ENCODE measurements at regions of chr20 and their contacts with region 1.

Region 1: DNA sequence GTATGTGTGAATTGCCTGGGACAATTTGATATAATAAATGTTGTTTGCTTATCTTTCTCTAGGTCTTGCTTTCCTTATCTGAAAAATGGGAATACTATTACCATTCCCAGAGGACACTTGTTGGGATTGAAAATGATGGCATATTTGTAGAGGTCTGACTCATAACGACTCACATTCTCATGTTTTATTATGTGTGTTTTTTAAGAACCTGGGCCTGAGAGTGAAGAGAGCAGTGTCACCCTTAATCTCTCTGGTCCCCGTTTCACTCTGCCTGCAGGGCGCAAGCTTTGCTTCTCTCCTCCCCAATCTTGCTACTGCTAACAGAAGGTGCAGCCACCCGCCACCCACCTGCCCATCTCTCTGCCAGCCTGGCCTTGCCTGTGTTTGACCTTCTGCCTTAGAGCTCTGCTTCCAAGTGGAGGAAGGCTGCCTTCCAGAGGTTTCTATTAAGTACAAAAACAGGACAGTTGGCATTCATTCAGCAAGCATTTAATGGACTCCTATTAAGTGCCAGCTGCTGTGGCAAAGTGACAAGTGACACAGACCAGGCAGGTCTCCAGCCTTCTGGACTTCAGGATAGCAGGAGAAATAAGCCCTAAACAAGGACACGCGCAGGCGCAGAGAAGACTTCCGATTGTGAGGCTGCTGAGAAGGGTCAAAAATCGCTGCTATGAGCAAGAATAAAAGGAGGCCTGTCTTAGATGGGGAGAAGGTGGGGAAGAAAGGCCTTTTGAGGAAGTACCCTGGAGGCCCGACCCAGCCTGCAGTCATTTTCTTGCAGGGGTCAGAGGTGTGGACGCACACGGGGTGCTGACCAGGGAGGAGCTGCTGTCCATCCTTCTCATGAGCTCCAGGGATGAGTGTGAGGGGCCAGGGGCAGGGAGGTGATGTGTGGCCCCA is 112.5 kb downstream of the JPH2 start:
- DNase-seq: peak in 1 of 5 donors; percentile 8
- H3K4me3 ChIP-seq: no peak overlapping the region
- H3K27ac ChIP-seq: no peak overlapping the region
- H3K4me1 ChIP-seq: no peaks in the 10 kb centered on the region
- H3K27me3 ChIP-seq: no peaks in the 10 kb centered on the region
- CTCF ChIP-seq: no peak
- EP300 ChIP-seq: no peak
- POLR2A ChIP-seq: no peak

Region 2: DNA sequence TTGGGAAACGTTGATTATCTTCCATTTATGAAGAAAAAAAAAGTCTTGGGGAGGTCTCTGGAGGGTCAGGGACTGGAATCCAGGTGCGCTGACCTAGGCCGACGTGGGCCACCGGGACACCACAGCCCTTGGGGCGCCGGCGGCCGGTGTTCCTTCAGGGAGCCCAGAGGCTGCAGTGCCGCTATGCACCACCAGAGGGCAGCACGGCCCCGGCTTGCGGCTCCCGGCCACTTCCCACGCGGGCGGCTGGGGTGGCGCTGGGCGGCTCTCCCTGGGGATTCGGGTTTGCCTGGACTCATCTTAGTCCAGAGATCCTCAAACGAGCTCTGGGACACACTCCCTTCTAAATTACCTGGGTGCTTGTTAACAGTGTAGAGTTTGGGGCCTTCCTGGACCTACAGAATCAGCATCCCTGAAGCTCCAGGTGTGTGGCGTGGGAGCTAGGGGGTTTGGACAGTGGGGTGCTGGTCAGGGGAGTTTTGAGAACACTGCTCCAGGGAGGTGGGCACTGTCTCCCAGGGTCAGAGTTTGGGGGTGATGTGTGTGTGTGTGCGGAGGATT is 324.7 kb before region 1 on chr20:
- intact Hi-C with region 1: loop called in 1 of 4 experiments (anchors 5 kb)
- DNase-seq: peak; percentile 30 to 79 (median 46)
- H3K4me3 ChIP-seq: no peak overlapping the region
- H3K27ac ChIP-seq: no peak overlapping the region
- H3K4me1 ChIP-seq: no peaks in the 10 kb centered on the region
- H3K27me3 ChIP-seq: no peaks in the 10 kb centered on the region
- CTCF ChIP-seq: peak in 2 of 3 donors; percentile 51 to 90
- EP300 ChIP-seq: no peak
- POLR2A ChIP-seq: no peak

Region 3: DNA sequence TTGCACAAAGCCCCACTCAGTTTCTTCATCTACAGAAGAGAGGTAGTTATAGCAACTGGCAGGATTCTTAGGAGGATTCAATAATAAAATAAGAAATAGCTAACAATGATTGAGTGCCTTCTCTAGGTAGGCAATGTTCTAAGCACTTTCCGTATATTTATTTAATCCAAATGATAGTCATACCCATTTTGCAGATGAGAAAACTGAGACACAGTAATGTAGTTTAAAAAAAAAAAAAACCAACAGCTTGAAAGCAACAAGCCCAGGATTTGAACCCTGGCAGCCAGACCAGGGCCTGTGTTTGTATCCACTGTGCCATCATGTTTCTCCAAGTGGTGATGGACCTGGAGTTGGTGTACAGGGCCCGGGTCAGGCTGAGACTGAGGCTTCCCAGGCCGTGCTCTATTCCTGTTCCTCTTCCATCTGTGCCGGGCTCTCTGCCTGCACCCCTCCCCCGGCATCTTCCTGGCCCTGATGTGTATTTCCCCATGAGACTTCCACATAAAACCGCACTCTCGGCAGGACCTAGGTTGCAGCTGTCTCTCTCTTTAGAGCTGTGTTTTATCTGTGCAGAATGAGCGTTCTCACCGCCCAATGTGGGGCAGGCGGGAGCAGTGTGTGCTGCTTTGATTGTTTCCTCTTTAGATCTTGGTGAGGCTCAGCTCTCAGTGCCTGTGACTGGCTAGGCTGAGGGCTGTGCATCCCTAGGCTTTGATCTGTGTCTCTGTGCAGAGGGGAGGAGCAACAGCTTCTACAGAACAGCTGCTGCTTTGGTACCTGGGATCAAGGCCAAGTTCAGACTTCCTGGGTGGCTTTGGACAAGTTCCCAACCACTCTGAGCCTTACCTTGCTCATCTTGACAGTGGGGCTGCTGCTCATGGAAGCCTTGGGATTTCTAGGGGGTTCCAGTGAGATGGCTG is 110.4 kb before region 1 on chr20:
- intact Hi-C with region 1: no loop called
- DNase-seq: peak in 1 of 5 donors; percentile 54
- H3K4me3 ChIP-seq: no peak overlapping the region
- H3K27ac ChIP-seq: no peak overlapping the region
- H3K4me1 ChIP-seq: peaks cover 4% of the 10 kb centered on the region
- H3K27me3 ChIP-seq: no peaks in the 10 kb centered on the region
- CTCF ChIP-seq: no peak
- EP300 ChIP-seq: no peak
- POLR2A ChIP-seq: no peak

Region 4: DNA sequence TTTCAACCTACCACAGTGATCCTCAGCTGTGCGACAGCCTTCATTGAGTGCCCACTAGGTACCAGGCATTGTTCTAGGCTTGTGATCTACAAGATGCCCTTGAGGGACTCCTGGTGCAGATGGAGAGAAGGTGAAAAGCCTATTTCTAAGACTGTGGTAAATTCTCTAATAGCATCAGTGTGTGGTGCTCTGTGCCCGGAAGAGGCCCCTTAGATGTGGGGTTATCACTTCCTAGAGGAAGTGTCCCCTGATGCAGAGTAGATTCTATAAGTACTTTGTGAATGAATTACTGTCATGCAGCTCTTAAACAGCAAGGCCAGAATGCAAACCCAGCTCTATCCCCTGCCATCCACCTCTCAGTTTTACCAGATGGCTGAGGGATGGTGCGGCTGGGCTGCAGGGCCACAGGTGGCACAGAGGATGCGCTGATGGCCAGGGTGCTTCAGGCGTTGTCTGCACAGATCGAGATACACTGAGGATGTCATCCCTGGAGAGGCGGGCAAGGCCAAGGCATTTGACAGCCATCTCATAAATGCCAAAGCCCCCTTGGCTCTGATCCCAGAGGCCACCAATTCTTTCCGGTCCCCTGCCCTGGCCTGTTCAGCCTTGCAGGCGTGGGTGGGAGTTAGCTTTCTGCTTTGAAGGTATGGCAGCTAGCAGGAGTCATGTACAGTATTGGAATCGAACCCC is 63.1 kb before region 1 on chr20:
- intact Hi-C with region 1: no loop called
- DNase-seq: no peak
- H3K4me3 ChIP-seq: no peak overlapping the region
- H3K27ac ChIP-seq: no peak overlapping the region
- H3K4me1 ChIP-seq: no peaks in the 10 kb centered on the region
- H3K27me3 ChIP-seq: no peaks in the 10 kb centered on the region
- CTCF ChIP-seq: no peak
- EP300 ChIP-seq: no peak
- POLR2A ChIP-seq: no peak

Region 5: DNA sequence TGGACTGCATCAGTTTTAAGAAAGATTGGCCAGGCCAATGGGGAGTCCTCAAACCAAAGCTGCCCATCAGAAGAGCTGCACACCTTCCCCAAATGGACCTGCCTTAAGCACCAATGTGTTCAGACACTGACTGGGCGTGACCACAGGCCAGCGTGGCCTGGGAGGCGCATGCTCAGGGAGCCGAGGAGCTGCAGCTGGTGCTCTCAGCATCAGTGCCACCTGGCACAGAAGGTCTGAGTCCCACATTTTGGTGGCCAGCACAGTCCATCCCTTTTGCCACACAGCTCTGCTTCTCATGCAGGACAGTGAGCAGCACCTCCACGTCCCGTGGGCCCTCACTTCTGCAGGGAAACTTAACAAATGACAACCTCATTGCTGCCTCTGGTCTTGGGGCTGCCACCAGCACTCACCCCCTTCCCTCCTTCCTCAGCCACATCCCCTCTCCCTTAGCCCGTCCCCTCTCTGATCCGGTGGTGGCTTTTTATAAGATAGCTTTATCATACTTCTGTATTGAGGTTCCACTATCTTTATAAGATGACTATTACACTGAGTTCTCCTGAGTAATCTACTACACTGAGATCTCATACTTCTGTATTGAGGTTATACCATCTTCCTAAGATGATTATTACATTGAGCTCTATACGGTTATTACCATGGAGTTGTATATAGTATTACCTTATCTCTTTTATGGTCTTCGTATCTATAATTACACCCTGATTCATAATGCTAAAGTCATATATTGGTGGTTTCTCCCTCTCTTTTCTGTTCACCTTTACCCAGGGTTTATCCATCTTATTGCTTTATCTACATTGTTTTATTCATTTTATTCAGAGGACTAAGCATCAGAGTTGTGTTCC is 50.8 kb before region 1 on chr20:
- intact Hi-C with region 1: no loop called
- DNase-seq: no peak
- H3K4me3 ChIP-seq: no peak overlapping the region
- H3K27ac ChIP-seq: no peak overlapping the region
- H3K4me1 ChIP-seq: no peaks in the 10 kb centered on the region
- H3K27me3 ChIP-seq: no peaks in the 10 kb centered on the region
- CTCF ChIP-seq: no peak
- EP300 ChIP-seq: no peak
- POLR2A ChIP-seq: no peak

Measured in ovary (tissue), 10 donors.